ENCODE measurements at regions of chr11 and their contacts with region 1.

Region 1: DNA sequence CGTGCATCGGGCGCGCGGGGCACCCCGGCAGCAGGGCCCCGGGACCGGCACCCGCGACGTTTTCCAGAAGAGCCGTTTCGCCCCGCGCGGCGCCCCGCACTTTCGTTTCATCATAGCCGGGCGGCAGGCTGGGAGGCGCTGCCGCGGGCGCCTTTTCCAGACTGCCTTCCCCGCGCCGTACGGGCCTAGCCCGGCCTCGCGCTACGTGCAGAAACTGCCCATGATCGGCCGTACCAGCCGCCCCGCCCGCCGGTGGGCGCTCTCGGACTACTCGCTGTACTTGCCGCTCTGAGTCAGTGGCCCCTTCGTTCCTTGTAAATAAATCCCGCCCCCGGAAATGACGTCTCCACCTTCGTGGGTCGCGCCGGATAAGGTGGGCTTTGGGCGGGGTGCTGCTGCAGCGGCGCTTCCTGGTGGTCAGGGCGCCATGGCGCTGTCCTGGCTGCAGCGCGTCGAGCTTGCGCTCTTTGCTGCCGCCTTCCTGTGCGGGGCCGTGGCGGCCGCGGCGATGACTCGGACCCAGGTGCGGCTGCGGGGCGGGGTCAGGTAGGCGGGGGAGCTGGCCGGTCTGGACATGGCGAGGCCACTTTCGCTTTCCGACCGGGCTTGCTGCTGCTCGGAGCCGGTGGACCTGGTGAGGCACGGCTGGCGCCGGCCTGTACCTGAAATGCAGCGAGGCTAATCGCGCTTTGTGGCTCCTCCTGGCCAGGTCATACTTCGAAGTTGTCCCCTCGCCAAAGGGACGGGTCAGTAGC is at the start of gene TMEM179B:
- DNase-seq: peak; percentile 99
- ATAC-seq: peak; percentile 92
- total RNA-seq, gene TMEM179B: 29.6 TPM

Region 2: GRCh38 chr11:62573592-62574362 is 213.4 kb before region 1 on chr11 and contains the start of gene EEF1G:
- intact Hi-C with region 1: no loop called
- DNase-seq: peak; percentile 97
- ATAC-seq: peak; percentile 98
- total RNA-seq, gene EEF1G: 811 TPM

Region 3: DNA sequence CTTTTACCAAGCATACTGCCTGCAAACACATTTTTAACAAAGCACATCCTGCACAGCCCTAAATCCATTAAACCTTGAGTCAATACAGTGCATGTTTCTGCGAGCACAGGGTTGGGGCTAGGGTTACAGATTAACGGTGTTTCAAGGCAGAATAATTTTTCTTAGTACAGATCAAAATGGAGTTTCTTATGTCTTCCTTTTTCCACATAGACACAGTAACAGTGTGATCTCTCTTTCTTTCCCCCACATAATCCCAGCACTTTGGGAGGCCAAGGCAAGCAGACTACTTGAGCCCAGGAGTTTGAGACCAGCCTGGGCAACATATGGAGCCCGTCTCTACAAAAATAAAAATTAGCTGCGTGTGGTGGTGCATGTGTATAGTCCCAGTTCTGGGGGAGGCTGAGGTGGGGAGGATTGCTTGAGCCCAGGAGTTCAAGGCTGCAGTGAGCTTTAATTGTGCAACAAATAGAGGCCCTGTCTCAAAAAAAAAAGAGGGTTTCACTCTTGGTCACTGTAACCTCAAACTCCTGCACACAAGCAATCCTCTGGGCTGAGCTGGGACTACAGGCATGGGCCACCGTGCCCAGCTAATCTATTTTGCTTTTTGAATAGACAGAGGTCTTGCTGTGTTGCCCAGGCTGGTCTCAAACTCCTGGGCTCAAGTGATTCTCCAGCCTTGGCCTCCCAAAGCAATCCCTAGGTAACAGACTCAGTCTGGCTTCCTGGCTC is 73.8 kb after region 1 on chr11:
- intact Hi-C with region 1: loop called (anchors 5 kb)
- DNase-seq: no peak
- ATAC-seq: no peak

Measured in sciatic nerve (tissue), 2 donors.